ENCODE measurements at regions of chr12 and their contacts with region 1.

Region 1: GRCh38 chr12:71303199-71303598 is 136.4 kb upstream of the LGR5 start:
- DNase-seq: no peak
- H3K4me3 ChIP-seq: no peak overlapping the region
- H3K27ac ChIP-seq: no peak overlapping the region
- H3K4me1 ChIP-seq: no peaks in the 10 kb centered on the region
- H3K27me3 ChIP-seq: no peaks in the 10 kb centered on the region
- CTCF ChIP-seq: no peak
- EP300 ChIP-seq: no peak
- POLR2A ChIP-seq: no peak

Region 2: DNA sequence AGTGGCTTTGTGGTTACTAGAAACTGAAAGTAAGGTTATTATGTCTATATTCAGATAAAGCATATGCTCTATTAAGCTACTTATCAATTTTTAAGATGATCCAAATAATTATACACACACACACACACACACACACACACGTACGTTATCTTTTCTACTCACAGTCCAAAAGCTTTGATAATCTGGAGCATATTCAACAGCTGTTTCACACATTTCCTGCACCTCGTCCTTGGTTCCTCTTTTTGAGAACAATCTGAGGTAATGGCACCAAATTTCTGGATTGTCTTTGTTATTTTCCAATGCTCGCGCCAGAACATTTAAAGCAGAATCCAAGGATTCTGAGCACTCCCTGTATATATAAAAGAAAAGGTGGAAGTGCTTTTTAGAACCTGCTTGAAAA is 322.9 kb after region 1 on chr12:
- in situ Hi-C with region 1: no loop called
- intact Hi-C with region 1: no loop called
- DNase-seq: no peak
- H3K4me3 ChIP-seq: no peak overlapping the region
- H3K27ac ChIP-seq: no peak overlapping the region
- H3K4me1 ChIP-seq: peaks cover 0 to 7% (median 0%) of the 10 kb centered on the region in 4 donors
- H3K27me3 ChIP-seq: no peaks in the 10 kb centered on the region
- CTCF ChIP-seq: no peak
- EP300 ChIP-seq: no peak
- POLR2A ChIP-seq: no peak

Region 3: GRCh38 chr12:72658615-72659014 is 1355.4 kb after region 1 on chr12:
- in situ Hi-C with region 1: no loop called
- intact Hi-C with region 1: loop called (anchors 10 kb)
- DNase-seq: no peak
- H3K4me3 ChIP-seq: no peak overlapping the region
- H3K27ac ChIP-seq: no peak overlapping the region
- H3K4me1 ChIP-seq: no peaks in the 10 kb centered on the region
- H3K27me3 ChIP-seq: no peaks in the 10 kb centered on the region
- CTCF ChIP-seq: no peak
- EP300 ChIP-seq: no peak
- POLR2A ChIP-seq: no peak

Region 4: DNA sequence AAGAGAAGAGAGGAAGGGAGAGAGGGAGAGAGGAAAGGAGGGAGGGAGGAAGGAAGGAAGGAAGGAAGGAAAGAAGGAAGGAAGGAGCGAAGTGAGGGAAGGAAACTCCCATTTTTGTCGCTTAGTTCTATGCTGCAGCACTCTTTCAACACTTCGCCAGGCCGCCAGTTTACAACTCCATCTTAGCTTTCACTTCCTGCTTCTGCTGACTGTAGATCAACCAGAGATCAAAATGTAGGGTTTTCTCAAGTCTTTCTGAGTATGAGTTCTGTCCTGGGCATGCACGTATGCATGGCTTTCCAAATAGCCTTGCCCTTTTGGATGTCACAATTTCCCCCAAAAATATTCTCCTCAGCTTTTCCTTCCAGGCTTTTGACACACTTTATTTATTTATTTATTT is 1692.4 kb after region 1 on chr12:
- in situ Hi-C with region 1: no loop called
- intact Hi-C with region 1: no loop called
- DNase-seq: no peak
- H3K4me3 ChIP-seq: no peak overlapping the region
- H3K27ac ChIP-seq: no peak overlapping the region
- H3K4me1 ChIP-seq: no peaks in the 10 kb centered on the region
- H3K27me3 ChIP-seq: no peaks in the 10 kb centered on the region
- CTCF ChIP-seq: no peak
- EP300 ChIP-seq: no peak
- POLR2A ChIP-seq: no peak

Measured in transverse colon (tissue), 4 donors.